CD8-positive, alpha-beta T cell (primary cell): ENCODE measurements at regions of chr5 and their contacts with region 1.

Region 1: DNA sequence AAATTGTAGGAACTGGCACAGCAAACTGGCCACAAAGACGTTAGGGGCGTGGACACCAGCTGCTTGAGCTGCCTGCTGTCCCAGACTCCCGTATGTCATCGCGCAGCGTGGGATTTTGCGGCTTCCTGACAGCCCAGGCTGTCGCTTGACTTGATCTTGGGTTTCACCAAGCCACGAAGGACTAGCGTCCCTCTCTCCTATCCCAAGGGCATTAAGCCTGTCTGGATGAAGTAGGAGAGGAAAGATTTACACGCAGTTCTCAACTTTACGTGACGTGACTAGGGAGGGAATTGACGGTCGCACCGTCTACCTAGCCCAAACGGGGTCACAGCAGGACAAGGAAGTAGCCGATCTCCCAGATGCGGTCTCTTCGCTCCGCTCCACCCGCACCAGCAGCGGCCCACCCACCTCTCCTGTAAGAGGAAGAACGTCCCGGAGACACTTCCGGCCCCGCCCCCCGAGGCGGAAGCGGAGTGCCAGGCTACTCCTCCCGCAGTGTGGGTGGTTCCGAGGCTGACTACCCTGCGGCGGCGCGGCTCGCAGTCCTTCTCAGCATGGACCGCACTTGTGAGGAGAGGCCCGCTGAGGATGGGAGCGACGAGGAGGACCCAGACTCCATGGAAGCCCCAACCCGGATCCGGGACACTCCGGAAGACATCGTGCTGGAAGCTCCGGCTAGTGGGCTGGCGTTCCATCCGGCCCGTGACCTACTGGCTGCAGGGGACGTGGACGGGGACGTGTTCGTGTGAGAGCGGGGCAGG is at the start of gene WDR55:
- DNase-seq: peak; percentile 90 to 98 (median 97)
- ATAC-seq: peak; percentile 92
- H3K4me3 ChIP-seq: peak within 1 kb of the TSS; percentile 80 to 95
- H3K4me3 Mint-ChIP-seq: peak within 1 kb of the TSS; percentile 89
- H3K27ac ChIP-seq: peak within 1 kb of the TSS; percentile 90 to 91
- H3K27ac Mint-ChIP-seq: peak within 1 kb of the TSS; percentile 96
- H3K4me1 ChIP-seq: peaks cover 15% of the 10 kb centered on the region
- H3K4me1 Mint-ChIP-seq: peaks cover 38% of the 10 kb centered on the region
- H3K27me3 ChIP-seq: no peaks in the 10 kb centered on the region
- H3K27me3 Mint-ChIP-seq: no peaks in the 10 kb centered on the region
- CTCF ChIP-seq: no peak
- total RNA-seq, gene WDR55: 45.4 to 49.2 TPM

Region 2: DNA sequence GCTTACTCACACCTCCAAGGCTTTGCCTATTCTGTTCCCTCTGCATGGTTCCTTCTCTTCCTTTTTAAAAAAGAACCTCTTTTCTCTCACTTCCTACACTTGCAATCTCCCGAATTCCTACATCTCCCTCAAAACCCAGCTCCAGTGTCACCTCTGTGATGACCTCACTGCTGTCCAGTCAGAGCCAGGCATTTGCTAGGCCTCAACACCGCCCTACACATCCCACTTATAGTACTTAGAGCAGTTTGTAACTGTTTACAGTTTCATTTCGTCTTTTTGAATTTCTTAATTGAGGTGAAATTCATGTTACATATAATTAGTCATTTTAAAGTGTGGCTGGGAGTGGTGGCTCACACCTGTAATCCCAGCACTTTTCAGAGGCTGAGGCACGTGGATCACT is 62.4 kb before region 1 on chr5:
- CTCF ChIA-PET with region 1: no interaction called
- POLR2A ChIA-PET with region 1: no interaction called
- intact Hi-C with region 1: loop called in 1 of 2 experiments (anchors 2 kb)
- DNase-seq: no peak
- ATAC-seq: no peak
- H3K4me3 ChIP-seq: no peak overlapping the region
- H3K4me3 Mint-ChIP-seq: no peak overlapping the region
- H3K27ac ChIP-seq: no peak overlapping the region
- H3K27ac Mint-ChIP-seq: no peak overlapping the region
- H3K4me1 ChIP-seq: no peaks in the 10 kb centered on the region
- H3K4me1 Mint-ChIP-seq: no peaks in the 10 kb centered on the region
- H3K27me3 ChIP-seq: no peaks in the 10 kb centered on the region
- H3K27me3 Mint-ChIP-seq: no peaks in the 10 kb centered on the region
- CTCF ChIP-seq: no peak

Region 3: GRCh38 chr5:140962190-140962589 is 297.7 kb after region 1 on chr5:
- CTCF ChIA-PET with region 1: no interaction called
- POLR2A ChIA-PET with region 1: no interaction called
- intact Hi-C with region 1: no loop called
- DNase-seq: no peak
- ATAC-seq: no peak
- H3K4me3 ChIP-seq: no peak overlapping the region
- H3K4me3 Mint-ChIP-seq: no peak overlapping the region
- H3K27ac ChIP-seq: no peak overlapping the region
- H3K27ac Mint-ChIP-seq: no peak overlapping the region
- H3K4me1 ChIP-seq: no peaks in the 10 kb centered on the region
- H3K4me1 Mint-ChIP-seq: peaks cover 3% of the 10 kb centered on the region
- H3K27me3 ChIP-seq: no peaks in the 10 kb centered on the region
- H3K27me3 Mint-ChIP-seq: peaks cover 24% of the 10 kb centered on the region
- CTCF ChIP-seq: no peak